Panc1 (cell line): ENCODE measurements at regions of chr2 and their contacts with region 1.

Region 1: GRCh38 chr2:169397697-169398096 is 35.4 kb upstream of the LRP2 start:
- DNase-seq: no peak
- ATAC-seq: peak; percentile 69; the same call in 1 of the 2 replicates
- H3K4me3 ChIP-seq: no peak overlapping the region
- H3K27ac ChIP-seq: no peak overlapping the region
- H3K4me1 ChIP-seq: no peaks in the 10 kb centered on the region
- H3K27me3 ChIP-seq: peaks cover 15% of the 10 kb centered on the region; the same call in 1 of the 2 replicates
- CTCF ChIP-seq: peak; percentile 59; the same call in 1 of the 2 replicates

Region 2: DNA sequence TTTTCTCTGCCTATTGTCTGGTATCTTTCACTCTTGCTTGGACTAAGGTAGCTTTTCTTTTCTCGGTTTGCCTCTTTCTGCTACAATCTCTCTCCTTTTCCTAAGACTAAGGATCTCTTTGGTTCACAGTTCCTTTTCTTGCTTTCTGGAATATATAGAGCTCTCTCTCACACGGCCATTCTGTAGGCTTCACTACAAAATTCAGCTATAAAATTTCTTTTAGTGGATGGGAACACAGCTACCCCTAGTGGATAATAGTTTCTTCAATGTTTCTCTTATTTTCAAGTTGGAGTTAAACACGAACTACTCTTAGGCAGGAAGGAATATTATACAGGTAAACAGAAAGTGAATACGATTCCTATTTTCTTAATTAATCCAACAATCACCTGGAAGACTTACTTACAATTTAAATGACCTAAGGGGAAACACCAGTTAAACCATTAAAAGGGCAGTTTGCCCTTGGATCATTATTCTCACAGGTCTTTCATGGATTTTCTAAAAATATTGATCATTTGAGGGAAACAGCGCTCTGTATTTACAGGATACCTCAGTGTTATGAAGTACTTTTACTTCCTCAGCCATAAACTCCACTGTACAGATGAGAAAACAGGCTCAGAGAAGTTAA is 175.8 kb before region 1 on chr2:
- CTCF ChIA-PET with region 1: no interaction called
- POLR2A ChIA-PET with region 1: no interaction called
- in situ Hi-C with region 1: no loop called
- intact Hi-C with region 1: loop called (anchors 10 kb)
- DNase-seq: no peak
- ATAC-seq: 0 out of 2 replicates have a peak, but pooled peaks have one; percentile 34
- H3K4me3 ChIP-seq: no peak overlapping the region
- H3K27ac ChIP-seq: no peak overlapping the region
- H3K4me1 ChIP-seq: no peaks in the 10 kb centered on the region
- H3K27me3 ChIP-seq: peaks cover 6% of the 10 kb centered on the region
- CTCF ChIP-seq: peak; percentile 64; the same call in 1 of the 2 replicates

Region 3: GRCh38 chr2:169300636-169301530 is 96.8 kb before region 1 on chr2:
- CTCF ChIA-PET with region 1: no interaction called
- POLR2A ChIA-PET with region 1: no interaction called
- in situ Hi-C with region 1: no loop called
- intact Hi-C with region 1: no loop called
- DNase-seq: no peak
- ATAC-seq: no peak
- H3K4me3 ChIP-seq: no peak overlapping the region
- H3K27ac ChIP-seq: no peak overlapping the region
- H3K4me1 ChIP-seq: no peaks in the 10 kb centered on the region
- H3K27me3 ChIP-seq: peaks cover 4% of the 10 kb centered on the region
- CTCF ChIP-seq: no peak

Region 4: DNA sequence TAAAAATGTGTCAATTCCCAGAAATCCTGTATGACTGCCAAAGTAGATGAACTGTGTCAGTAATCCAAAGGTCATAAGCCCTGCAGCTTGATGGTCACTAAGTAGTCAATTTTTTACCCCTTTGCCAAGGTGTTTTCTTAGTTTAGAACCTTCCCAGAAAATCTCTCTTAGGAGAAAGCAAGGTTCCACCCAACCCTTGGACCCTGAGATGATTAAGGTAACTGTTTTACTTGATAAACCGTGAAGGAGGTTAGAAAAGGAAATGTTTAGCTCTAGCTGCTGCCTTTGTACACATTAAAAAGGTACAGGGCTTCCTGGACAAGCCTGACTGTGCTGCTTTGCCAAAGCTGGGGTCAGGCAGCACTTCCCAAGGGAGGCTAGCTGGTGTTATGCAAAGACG is 11.0 kb before region 1 on chr2:
- CTCF ChIA-PET with region 1: no interaction called
- POLR2A ChIA-PET with region 1: no interaction called
- in situ Hi-C with region 1: no loop called
- intact Hi-C with region 1: no loop called
- DNase-seq: no peak
- ATAC-seq: no peak
- H3K4me3 ChIP-seq: no peak overlapping the region
- H3K27ac ChIP-seq: no peak overlapping the region
- H3K4me1 ChIP-seq: no peaks in the 10 kb centered on the region
- H3K27me3 ChIP-seq: peaks cover 17% of the 10 kb centered on the region
- CTCF ChIP-seq: no peak

Region 5: DNA sequence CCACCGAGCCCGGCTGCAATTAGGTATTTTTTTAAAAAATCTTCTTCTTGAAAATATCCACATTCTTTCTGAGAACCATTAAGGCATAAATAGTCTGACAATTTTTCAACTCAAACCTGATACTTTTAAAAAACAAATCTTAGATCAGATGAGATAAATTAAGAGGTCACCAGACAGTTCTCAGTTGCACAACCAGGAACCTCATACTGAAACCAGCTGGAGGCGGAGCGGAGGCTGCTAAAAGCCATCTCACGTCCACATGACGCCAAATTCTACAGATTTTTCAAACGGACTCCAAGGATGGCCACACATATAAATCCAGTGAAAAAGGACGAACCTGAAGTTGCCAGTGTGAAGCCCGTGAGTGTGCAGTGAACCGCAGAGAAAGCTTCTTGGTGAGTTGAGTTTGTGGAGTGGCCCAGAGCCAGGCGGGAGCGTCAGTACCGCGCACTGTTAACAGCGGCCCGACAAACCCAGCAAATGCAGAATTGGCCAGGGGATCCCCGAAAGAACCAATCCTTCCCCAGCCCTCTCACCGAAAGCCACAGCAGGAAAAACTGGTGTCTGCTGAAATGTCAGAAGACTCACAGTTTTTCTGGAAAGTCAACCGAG is 28.5 kb after region 1 on chr2:
- CTCF ChIA-PET with region 1: no interaction called
- POLR2A ChIA-PET with region 1: no interaction called
- in situ Hi-C with region 1: no loop called
- intact Hi-C with region 1: no loop called
- DNase-seq: no peak
- ATAC-seq: no peak
- H3K4me3 ChIP-seq: no peak overlapping the region
- H3K27ac ChIP-seq: no peak overlapping the region
- H3K4me1 ChIP-seq: no peaks in the 10 kb centered on the region
- H3K27me3 ChIP-seq: peaks cover 21% of the 10 kb centered on the region
- CTCF ChIP-seq: no peak